ENCODE measurements at regions of chr11 and their contacts with region 1.

Region 1: GRCh38 chr11:110317516-110317932 is 21.1 kb upstream of the RDX start:
- DNase-seq: peak in 1 of 2 experiments; percentile 43
- H3K4me3 ChIP-seq: no peak overlapping the region
- H3K27ac ChIP-seq: no peak overlapping the region
- H3K4me1 ChIP-seq: peaks cover 33% of the 10 kb centered on the region
- H3K27me3 ChIP-seq: no peaks in the 10 kb centered on the region
- CTCF ChIP-seq: no peak

Region 2: GRCh38 chr11:110077831-110078325 is 239.6 kb before region 1 on chr11:
- CTCF ChIA-PET with region 1: no interaction called
- POLR2A ChIA-PET with region 1: interaction called, 12 read pairs
- intact Hi-C with region 1: no loop called
- DNase-seq: peak in 1 of 2 experiments; percentile 52
- H3K4me3 ChIP-seq: no peak overlapping the region
- H3K27ac ChIP-seq: peak overlapping the region; percentile 54
- H3K4me1 ChIP-seq: peaks cover 36% of the 10 kb centered on the region
- H3K27me3 ChIP-seq: no peaks in the 10 kb centered on the region
- CTCF ChIP-seq: no peak

Region 3: GRCh38 chr11:110251837-110252236 is 65.7 kb before region 1 on chr11:
- CTCF ChIA-PET with region 1: interaction called, 20 read pairs
- POLR2A ChIA-PET with region 1: no interaction called
- intact Hi-C with region 1: no loop called
- DNase-seq: peak; percentile 58 to 95
- H3K4me3 ChIP-seq: no peak overlapping the region
- H3K27ac ChIP-seq: peak overlapping the region; percentile 66
- H3K4me1 ChIP-seq: peaks cover 24% of the 10 kb centered on the region
- H3K27me3 ChIP-seq: no peaks in the 10 kb centered on the region
- CTCF ChIP-seq: no peak

Region 4: GRCh38 chr11:110279881-110280280 is 37.6 kb before region 1 on chr11:
- CTCF ChIA-PET with region 1: no interaction called
- POLR2A ChIA-PET with region 1: no interaction called
- intact Hi-C with region 1: no loop called
- DNase-seq: no peak
- H3K4me3 ChIP-seq: no peak overlapping the region
- H3K27ac ChIP-seq: peak overlapping the region; percentile 32; the same call in 1 of the 2 replicates
- H3K4me1 ChIP-seq: 0 out of 2 replicates have a peak, but pooled peaks cover 3% of the 10 kb centered on the region
- H3K27me3 ChIP-seq: no peaks in the 10 kb centered on the region
- CTCF ChIP-seq: no peak

Region 5: GRCh38 chr11:110337570-110338193 is 20.2 kb after region 1 on chr11:
- CTCF ChIA-PET with region 1: no interaction called
- POLR2A ChIA-PET with region 1: interaction called, 30 read pairs
- intact Hi-C with region 1: no loop called
- DNase-seq: peak; percentile 73 to 94
- H3K4me3 ChIP-seq: peak overlapping the region; percentile 3; the same call in 1 of the 2 replicates
- H3K27ac ChIP-seq: peak overlapping the region; percentile 70
- H3K4me1 ChIP-seq: peaks cover 14% of the 10 kb centered on the region
- H3K27me3 ChIP-seq: no peaks in the 10 kb centered on the region
- CTCF ChIP-seq: no peak